AG04449 (cell line): ENCODE measurements at regions of chr4 and their contacts with region 1.

Region 1: GRCh38 chr4:48578132-48578968 is 88.3 kb downstream of the ZAR1 start:
- DNase-seq: no peak
- H3K4me3 ChIP-seq: no peak overlapping the region
- CTCF ChIP-seq: peak; percentile 77

Region 2: DNA sequence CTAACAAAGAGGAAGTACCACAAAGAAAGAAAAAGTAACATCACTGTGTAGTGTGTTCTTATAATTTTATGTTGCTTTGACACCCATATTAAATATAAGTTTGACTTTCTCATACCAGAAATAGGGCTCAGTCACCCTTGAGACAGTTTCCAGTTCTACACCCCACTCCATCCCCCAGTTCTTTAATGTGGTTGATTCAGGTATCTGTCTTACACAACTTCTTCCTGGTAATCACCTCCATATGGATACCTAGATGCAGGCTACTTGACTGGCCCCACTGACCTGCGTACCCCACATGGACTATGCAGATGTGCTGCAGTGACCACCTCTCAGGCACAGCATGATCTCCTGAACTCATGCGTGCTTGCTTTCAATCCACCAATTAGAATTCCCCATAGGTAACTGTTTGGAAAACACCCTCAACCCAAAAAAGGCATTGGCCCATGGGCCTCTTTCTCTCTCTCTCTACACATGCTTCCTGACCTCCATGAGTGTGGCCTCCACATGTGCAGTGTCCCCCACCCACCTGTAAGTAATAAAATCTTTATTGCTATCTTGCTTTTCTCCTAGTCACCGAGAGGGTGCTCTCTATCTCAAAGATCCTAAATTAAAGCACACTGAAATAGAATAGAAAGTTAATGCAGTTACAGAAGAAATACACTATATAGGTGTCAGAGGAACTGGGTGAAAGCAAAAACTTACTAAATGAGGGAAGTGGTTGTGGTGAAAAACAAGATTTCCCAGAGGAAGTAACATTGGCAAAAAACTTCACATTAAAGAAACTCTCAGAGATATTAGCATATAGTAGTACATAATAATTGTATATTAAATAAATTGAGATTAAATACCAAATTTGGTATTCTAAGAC is 10.1 kb after region 1 on chr4:
- CTCF ChIA-PET with region 1: interaction called, 13 read pairs
- POLR2A ChIA-PET with region 1: no interaction called
- DNase-seq: no peak
- H3K4me3 ChIP-seq: no peak overlapping the region
- CTCF ChIP-seq: no peak

Region 3: DNA sequence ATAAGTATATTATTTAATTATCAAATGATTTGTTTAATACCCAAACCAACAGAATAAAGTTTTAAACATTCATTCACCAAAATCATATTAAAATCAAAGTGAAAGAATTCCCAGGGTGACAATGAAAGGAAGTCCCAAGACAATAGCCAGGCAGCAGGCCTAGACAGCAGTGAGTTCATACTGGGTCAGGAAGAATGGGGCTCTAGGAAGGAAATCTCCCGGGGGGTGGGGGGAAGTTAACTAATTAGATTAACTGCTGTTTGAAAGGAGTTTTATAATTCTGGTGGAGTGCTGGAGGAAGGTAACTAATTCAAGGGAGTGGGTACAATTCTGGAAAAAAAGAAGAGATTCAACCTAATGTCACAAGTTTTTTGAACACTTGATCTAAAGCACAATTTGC is 15.8 kb after region 1 on chr4:
- CTCF ChIA-PET with region 1: interaction called, 13 read pairs
- POLR2A ChIA-PET with region 1: no interaction called
- DNase-seq: no peak
- H3K4me3 ChIP-seq: no peak overlapping the region
- CTCF ChIP-seq: no peak

Region 4: DNA sequence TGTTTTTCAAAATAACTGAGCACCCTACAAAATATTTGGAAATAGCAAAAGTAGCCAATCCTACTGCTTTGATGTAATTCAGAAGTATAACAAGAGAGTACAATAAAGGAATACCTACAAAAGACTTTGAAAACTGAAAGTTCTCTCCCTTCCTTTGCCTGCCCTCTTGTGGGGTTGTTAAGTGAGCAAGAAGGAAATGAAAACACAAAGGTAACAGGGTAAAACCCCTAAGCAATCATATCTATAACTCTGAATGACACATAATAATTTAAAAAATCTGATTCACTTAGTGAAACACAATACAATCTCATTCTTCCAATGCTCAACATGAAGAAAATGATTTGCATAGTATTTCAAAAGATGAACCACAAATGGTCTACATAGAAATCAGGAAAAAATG is 103.5 kb after region 1 on chr4:
- CTCF ChIA-PET with region 1: interaction called, 45 read pairs
- POLR2A ChIA-PET with region 1: no interaction called
- DNase-seq: no peak
- H3K4me3 ChIP-seq: no peak overlapping the region
- CTCF ChIP-seq: peak; percentile 39

Region 5: GRCh38 chr4:48687313-48688051 is 109.1 kb after region 1 on chr4:
- CTCF ChIA-PET with region 1: interaction called, 45 read pairs
- POLR2A ChIA-PET with region 1: no interaction called
- DNase-seq: no peak
- H3K4me3 ChIP-seq: no peak overlapping the region
- CTCF ChIP-seq: no peak

Region 6: GRCh38 chr4:48963042-48963679 is 384.8 kb after region 1 on chr4:
- CTCF ChIA-PET with region 1: interaction called, 110 read pairs
- POLR2A ChIA-PET with region 1: no interaction called
- DNase-seq: peak; percentile 62
- H3K4me3 ChIP-seq: no peak overlapping the region
- CTCF ChIP-seq: peak; percentile 93

Region 7: GRCh38 chr4:48970471-48970921 is 392.1 kb after region 1 on chr4:
- CTCF ChIA-PET with region 1: interaction called, 110 read pairs
- POLR2A ChIA-PET with region 1: no interaction called
- DNase-seq: no peak
- H3K4me3 ChIP-seq: no peak overlapping the region
- CTCF ChIP-seq: no peak